ENCODE measurements at regions of chr1 and their contacts with region 1.

Region 1: GRCh38 chr1:31166462-31166861 is 73.2 kb downstream of the NKAIN1 start:
- DNase-seq: no peak
- ATAC-seq: no peak
- H3K4me3 ChIP-seq: no peak overlapping the region
- H3K4me3 Mint-ChIP-seq: no peak overlapping the region
- H3K27ac ChIP-seq: no peak overlapping the region
- H3K27ac Mint-ChIP-seq: no peak overlapping the region
- H3K4me1 ChIP-seq: no peaks in the 10 kb centered on the region
- H3K4me1 Mint-ChIP-seq: peaks cover 3% of the 10 kb centered on the region
- H3K27me3 ChIP-seq: no peaks in the 10 kb centered on the region
- H3K27me3 Mint-ChIP-seq: peaks cover 6% of the 10 kb centered on the region
- CTCF ChIP-seq: no peak

Region 2: DNA sequence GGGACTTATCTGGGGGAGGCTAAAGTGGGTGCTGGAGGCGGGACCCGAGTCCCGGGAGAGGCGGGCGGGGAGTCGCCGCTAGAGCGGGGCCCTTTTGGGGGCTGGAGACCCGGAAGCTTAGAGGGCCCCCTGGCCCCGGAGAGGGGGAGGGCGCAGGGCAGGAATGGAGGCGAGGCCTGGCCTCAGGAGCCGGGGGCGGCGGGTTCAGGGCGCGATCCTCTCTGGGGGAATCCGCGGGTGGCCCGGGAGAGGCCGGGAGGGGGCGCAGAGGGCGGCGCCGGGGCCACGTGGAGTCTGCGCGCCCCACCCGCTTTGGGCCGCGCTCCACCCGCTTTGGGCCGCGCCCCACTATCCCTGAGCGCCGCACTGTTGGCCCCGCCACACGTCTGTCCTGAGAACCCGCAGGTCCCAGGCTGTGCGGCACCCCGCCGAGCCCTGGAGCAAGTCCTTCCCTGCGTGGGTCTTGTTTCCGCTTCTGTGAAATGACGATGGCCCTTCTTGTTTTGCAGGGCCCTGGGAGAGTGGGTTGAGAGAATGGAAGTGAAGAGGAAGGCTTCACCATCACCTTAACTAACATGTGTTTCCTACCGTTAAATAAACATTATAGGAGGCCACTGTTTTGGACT is 11.1 kb before region 1 on chr1:
- CTCF ChIA-PET with region 1: interaction called, 11 read pairs
- POLR2A ChIA-PET with region 1: no interaction called
- intact Hi-C with region 1: no loop called
- DNase-seq: peak; percentile 4 to 73 (median 45)
- ATAC-seq: peak; percentile 78
- H3K4me3 ChIP-seq: peak overlapping the region; percentile 49 to 60
- H3K4me3 Mint-ChIP-seq: peak overlapping the region; percentile 87
- H3K27ac ChIP-seq: no peak overlapping the region
- H3K27ac Mint-ChIP-seq: peak overlapping the region; percentile 74
- H3K4me1 ChIP-seq: peaks cover 9% of the 10 kb centered on the region
- H3K4me1 Mint-ChIP-seq: peaks cover 10% of the 10 kb centered on the region
- H3K27me3 ChIP-seq: no peaks in the 10 kb centered on the region
- H3K27me3 Mint-ChIP-seq: no peaks in the 10 kb centered on the region
- CTCF ChIP-seq: no peak

Region 3: GRCh38 chr1:31182352-31182751 is 15.9 kb after region 1 on chr1:
- CTCF ChIA-PET with region 1: interaction called, 11 read pairs
- POLR2A ChIA-PET with region 1: no interaction called
- intact Hi-C with region 1: no loop called
- DNase-seq: peak; percentile 9 to 69 (median 45)
- ATAC-seq: peak; percentile 56
- H3K4me3 ChIP-seq: no peak overlapping the region
- H3K4me3 Mint-ChIP-seq: peak overlapping the region; percentile 15
- H3K27ac ChIP-seq: no peak overlapping the region
- H3K27ac Mint-ChIP-seq: no peak overlapping the region
- H3K4me1 ChIP-seq: peaks cover 7% of the 10 kb centered on the region
- H3K4me1 Mint-ChIP-seq: peaks cover 8% of the 10 kb centered on the region
- H3K27me3 ChIP-seq: peaks cover 11 to 14% of the 10 kb centered on the region in 2 experiments
- H3K27me3 Mint-ChIP-seq: peaks cover 57% of the 10 kb centered on the region
- CTCF ChIP-seq: no peak

Region 4: DNA sequence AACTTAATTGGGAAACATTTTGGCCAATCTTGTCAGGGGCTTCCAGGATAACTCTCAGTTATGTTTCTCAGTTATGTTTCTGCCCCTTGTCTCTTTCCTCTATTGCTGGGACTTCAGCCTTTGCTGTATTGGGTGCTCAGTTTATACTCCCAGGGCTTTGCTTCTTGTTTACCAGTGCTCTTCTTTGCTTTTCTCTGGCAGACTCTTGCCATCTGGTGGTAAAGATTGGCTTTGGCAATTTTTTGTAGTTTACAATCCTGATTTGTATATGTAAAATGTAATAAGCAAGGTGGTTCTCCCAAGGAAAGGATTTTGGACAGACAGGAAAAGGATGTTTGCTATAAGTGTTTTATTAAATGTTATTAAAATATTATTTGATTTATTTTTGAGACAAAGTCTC is 168.5 kb after region 1 on chr1:
- CTCF ChIA-PET with region 1: interaction called, 3 read pairs
- POLR2A ChIA-PET with region 1: no interaction called
- intact Hi-C with region 1: loop called (anchors 2 to 10 kb)
- DNase-seq: peak in 2 of 9 experiments; percentile 28 to 45
- ATAC-seq: no peak
- H3K4me3 ChIP-seq: no peak overlapping the region
- H3K4me3 Mint-ChIP-seq: no peak overlapping the region
- H3K27ac ChIP-seq: no peak overlapping the region
- H3K27ac Mint-ChIP-seq: no peak overlapping the region
- H3K4me1 ChIP-seq: no peaks in the 10 kb centered on the region
- H3K4me1 Mint-ChIP-seq: peaks cover 2% of the 10 kb centered on the region
- H3K27me3 ChIP-seq: no peaks in the 10 kb centered on the region
- H3K27me3 Mint-ChIP-seq: no peaks in the 10 kb centered on the region
- CTCF ChIP-seq: no peak

Region 5: GRCh38 chr1:31422505-31423319 is 256.2 kb after region 1 on chr1:
- CTCF ChIA-PET with region 1: interaction called, 4 read pairs
- POLR2A ChIA-PET with region 1: no interaction called
- intact Hi-C with region 1: loop called in 1 of 2 experiments (anchors 1 kb)
- DNase-seq: peak; percentile 27 to 78 (median 67)
- ATAC-seq: peak; percentile 77
- H3K4me3 ChIP-seq: no peak overlapping the region
- H3K4me3 Mint-ChIP-seq: no peak overlapping the region
- H3K27ac ChIP-seq: no peak overlapping the region
- H3K27ac Mint-ChIP-seq: no peak overlapping the region
- H3K4me1 ChIP-seq: no peaks in the 10 kb centered on the region
- H3K4me1 Mint-ChIP-seq: no peaks in the 10 kb centered on the region
- H3K27me3 ChIP-seq: no peaks in the 10 kb centered on the region
- H3K27me3 Mint-ChIP-seq: peaks cover 24% of the 10 kb centered on the region
- CTCF ChIP-seq: peak; percentile 86

Region 6: GRCh38 chr1:31548907-31549808 is 382.7 kb after region 1 on chr1:
- CTCF ChIA-PET with region 1: interaction called, 6 read pairs
- POLR2A ChIA-PET with region 1: no interaction called
- intact Hi-C with region 1: loop called in 1 of 2 experiments (anchors 1 kb)
- DNase-seq: peak; percentile 77 to 93 (median 84)
- ATAC-seq: peak; percentile 100
- H3K4me3 ChIP-seq: peak overlapping the region in 1 of 2 experiments; percentile 12
- H3K4me3 Mint-ChIP-seq: peak overlapping the region; percentile 30
- H3K27ac ChIP-seq: no peak overlapping the region
- H3K27ac Mint-ChIP-seq: no peak overlapping the region
- H3K4me1 ChIP-seq: peaks cover 4% of the 10 kb centered on the region
- H3K4me1 Mint-ChIP-seq: peaks cover 10% of the 10 kb centered on the region
- H3K27me3 ChIP-seq: peaks cover 0 to 2% of the 10 kb centered on the region in 2 experiments
- H3K27me3 Mint-ChIP-seq: peaks cover 9% of the 10 kb centered on the region
- CTCF ChIP-seq: peak; percentile 91